BJ (cell line): ENCODE measurements at regions of chr20 and their contacts with region 1.

Region 1: GRCh38 chr20:17620736-17621429 is 51.0 kb downstream of the DSTN start:
- DNase-seq: no peak
- H3K4me3 ChIP-seq: no peak overlapping the region
- H3K27me3 ChIP-seq: no peaks in the 10 kb centered on the region
- CTCF ChIP-seq: no peak

Region 2: GRCh38 chr20:17604852-17605660 is 15.8 kb before region 1 on chr20:
- CTCF ChIA-PET with region 1: no interaction called
- POLR2A ChIA-PET with region 1: no interaction called
- DNase-seq: no peak
- H3K4me3 ChIP-seq: no peak overlapping the region
- H3K27me3 ChIP-seq: no peaks in the 10 kb centered on the region
- CTCF ChIP-seq: no peak

Region 3: DNA sequence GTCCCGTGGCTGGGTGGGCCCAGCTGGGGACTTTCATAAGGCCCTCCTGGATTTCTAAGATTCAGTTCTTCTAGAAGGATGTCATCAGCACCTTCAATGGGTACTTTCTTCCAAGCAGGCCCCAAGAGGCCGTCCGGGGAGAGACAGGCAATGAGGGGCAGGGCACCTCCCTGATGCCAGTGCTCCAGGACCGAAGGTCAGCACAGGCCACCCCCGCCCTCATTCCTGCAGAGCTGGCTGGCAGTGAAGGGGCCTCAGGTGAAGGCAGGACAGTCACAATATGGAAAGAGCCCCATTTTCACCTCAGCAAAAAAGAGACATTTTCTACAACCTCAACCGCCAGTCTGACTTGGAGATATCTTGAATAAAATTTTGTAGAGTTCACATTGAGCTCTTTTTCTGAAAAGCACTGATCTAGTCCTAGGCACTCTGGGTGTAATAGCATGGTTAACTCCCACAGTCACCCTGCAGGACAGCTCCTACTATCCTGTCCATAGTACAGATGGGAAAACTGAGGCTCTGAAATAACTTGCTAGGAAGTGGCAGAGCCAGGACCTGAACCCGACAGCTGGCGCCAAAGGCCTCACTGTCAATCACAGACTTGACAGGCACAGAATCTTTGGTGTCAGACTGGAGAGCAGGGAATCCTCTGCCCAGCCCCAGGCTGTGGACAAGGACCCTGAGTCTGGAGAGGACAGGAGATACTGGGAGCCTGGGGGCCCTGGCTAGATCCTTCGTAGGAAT is 10.9 kb after region 1 on chr20:
- CTCF ChIA-PET with region 1: interaction called, 12 read pairs
- POLR2A ChIA-PET with region 1: no interaction called
- DNase-seq: no peak
- H3K4me3 ChIP-seq: no peak overlapping the region
- H3K27me3 ChIP-seq: no peaks in the 10 kb centered on the region
- CTCF ChIP-seq: no peak